WTC11 (cell line): ENCODE measurements at regions of chr22 and their contacts with region 1.

Region 1: GRCh38 chr22:37566903-37567820 is 6.9 kb downstream of the CDC42EP1 start:
- DNase-seq: peak; percentile 92
- ATAC-seq: peak; percentile 81
- H3K4me3 Mint-ChIP-seq: no peak overlapping the region
- H3K27ac Mint-ChIP-seq: no peak overlapping the region
- H3K4me1 Mint-ChIP-seq: peaks cover 46% of the 10 kb centered on the region
- H3K27me3 Mint-ChIP-seq: peaks cover 10% of the 10 kb centered on the region
- CTCF ChIP-seq: peak; percentile 90

Region 2: GRCh38 chr22:37486224-37486845 is 80.8 kb before region 1 on chr22 and contains the start of gene MFNG:
- CTCF ChIA-PET with region 1: interaction called, 10 read pairs
- POLR2A ChIA-PET with region 1: no interaction called
- DNase-seq: peak; percentile 75
- ATAC-seq: peak; percentile 92
- H3K4me3 Mint-ChIP-seq: peak within 1 kb of the TSS; percentile 56
- H3K27ac Mint-ChIP-seq: peak within 1 kb of the TSS; percentile 47
- H3K4me1 Mint-ChIP-seq: peaks cover 54% of the 10 kb centered on the region
- H3K27me3 Mint-ChIP-seq: no peaks in the 10 kb centered on the region
- CTCF ChIP-seq: no peak
- total RNA-seq, gene MFNG: 3.2 to 4.8 TPM (median 3.7 TPM) in 3 replicates

Region 3: DNA sequence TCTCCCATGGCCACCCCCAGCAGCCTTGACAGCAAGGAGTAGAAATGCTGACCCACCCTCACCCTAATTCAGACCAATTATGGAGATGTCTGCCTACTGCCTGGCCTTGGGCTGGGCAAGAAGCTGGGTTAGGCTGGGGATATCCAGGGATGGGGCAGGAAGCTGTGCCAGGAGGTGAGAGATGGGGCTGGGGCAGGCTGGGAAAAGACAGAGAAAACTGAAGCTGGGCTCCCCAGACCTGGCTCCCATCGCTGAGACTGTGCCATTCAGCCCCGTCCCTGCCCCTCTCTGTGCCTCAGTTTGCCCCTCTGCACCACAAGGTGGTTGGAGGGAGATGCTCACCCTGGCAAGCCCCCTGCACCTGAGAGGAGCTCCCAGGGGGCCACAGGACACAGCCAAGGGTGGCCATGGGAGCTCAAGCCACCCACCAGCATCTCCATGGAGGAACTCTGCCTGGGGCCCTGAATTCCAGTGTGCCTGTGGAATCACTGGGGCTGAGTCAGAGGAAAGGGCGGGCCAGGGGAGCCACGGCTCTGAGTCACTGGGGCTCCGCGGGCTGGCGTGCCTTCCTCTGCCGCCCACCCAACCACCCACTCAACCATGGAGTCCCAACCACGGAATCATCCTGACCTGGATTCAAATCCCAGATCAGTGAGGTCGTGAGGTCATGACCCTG is 42.0 kb before region 1 on chr22:
- CTCF ChIA-PET with region 1: interaction called, 11 read pairs
- POLR2A ChIA-PET with region 1: no interaction called
- DNase-seq: no peak
- ATAC-seq: no peak
- H3K4me3 Mint-ChIP-seq: no peak overlapping the region
- H3K27ac Mint-ChIP-seq: no peak overlapping the region
- H3K4me1 Mint-ChIP-seq: peaks cover 5% of the 10 kb centered on the region; the same call in 1 of the 2 replicates
- H3K27me3 Mint-ChIP-seq: peaks cover 17% of the 10 kb centered on the region
- CTCF ChIP-seq: no peak

Region 4: DNA sequence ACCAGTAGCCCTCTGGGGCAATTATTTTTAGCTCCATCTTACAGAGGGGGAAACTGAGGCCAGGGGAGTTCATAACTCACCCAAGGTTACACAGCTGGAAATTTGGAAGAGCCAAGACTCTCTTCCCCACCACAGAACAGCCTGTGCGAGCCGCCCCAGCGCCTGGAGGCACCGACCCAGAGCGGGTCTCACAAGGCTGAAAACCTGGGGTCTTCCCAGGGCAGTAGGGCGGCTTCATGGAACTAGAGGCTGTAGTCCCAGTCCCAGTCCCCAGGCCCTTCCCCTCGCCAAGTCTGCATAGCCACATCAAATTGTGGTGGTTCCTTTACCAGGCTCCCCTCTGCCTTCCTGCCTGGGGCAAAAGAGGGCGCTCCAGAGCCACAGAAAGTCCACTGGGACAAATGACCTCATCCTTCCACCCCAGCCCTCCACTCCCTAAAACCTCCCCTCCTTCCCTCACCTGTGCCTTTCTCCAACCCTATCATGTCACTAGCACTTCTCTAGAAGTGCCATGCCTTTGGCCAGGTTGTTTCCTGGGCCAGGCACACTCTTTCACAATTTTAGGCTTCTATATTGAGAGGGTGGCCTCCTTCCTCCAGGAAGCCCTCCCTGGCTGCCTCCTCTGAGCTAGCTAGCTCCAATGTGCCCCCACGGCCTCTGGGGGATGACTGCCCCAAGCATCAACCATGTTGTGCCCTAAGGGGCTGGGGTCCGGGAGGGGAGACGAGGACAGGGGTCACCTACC is 22.0 kb before region 1 on chr22:
- CTCF ChIA-PET with region 1: interaction called, 728 read pairs
- POLR2A ChIA-PET with region 1: interaction called, 24 read pairs
- DNase-seq: peak; percentile 92
- ATAC-seq: peak; percentile 74
- H3K4me3 Mint-ChIP-seq: peak overlapping the region; percentile 53
- H3K27ac Mint-ChIP-seq: peak overlapping the region; percentile 74; the same call in 1 of the 2 replicates
- H3K4me1 Mint-ChIP-seq: peaks cover 29% of the 10 kb centered on the region
- H3K27me3 Mint-ChIP-seq: no peaks in the 10 kb centered on the region; the same call in 1 of the 2 replicates
- CTCF ChIP-seq: peak; percentile 53; the same call in 1 of the 2 replicates

Region 5: GRCh38 chr22:37588546-37589215 is 21.5 kb after region 1 on chr22:
- CTCF ChIA-PET with region 1: interaction called, 146 read pairs
- POLR2A ChIA-PET with region 1: interaction called, 3 read pairs
- DNase-seq: no peak
- ATAC-seq: no peak
- H3K4me3 Mint-ChIP-seq: no peak overlapping the region
- H3K27ac Mint-ChIP-seq: no peak overlapping the region
- H3K4me1 Mint-ChIP-seq: peaks cover 6% of the 10 kb centered on the region
- H3K27me3 Mint-ChIP-seq: 0 out of 2 replicates have a peak, but pooled peaks cover 2% of the 10 kb centered on the region
- CTCF ChIP-seq: no peak